GM12878 (cell line): ENCODE measurements at regions of chr18 and their contacts with region 1.

Region 1: DNA sequence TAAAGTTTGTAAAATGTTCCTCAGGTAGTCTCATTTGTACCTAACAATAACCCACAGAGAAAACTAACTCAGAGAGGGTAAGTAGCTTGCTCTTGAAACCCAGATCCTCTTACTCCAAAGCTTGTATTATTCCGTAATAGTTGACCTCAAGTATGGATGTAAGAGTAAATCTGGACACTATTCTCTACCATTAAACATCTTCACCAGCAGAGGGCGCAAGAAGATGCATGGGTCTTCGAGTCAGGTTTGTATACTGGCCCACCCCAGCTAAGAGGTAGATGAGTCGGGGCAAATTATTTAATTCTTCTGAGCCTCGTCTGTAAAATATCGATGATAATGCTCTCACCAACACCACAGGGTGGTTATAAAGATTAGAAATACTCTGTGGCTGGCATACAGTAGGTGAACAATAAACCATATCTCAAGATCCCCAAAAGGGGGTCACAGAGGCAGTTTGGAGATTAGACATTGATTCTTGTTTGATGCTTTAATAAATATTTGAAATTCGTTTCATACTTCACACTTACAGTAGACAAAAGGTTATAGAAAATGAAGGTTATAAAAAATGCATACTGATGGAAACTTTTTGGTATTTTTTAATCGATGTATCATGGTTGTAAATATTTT is 3.5 kb upstream of the CABLES1 start:
- DNase-seq: peak; percentile 58
- ATAC-seq: peak; percentile 44
- H3K4me3 ChIP-seq: no peak overlapping the region
- H3K27ac ChIP-seq: no peak overlapping the region
- H3K4me1 ChIP-seq: peaks cover 18% of the 10 kb centered on the region
- H3K27me3 ChIP-seq: no peaks in the 10 kb centered on the region
- CTCF ChIP-seq: peak; percentile 64 to 82 (median 67)
- EP300 ChIP-seq: no peak
- POLR2A ChIP-seq: no peak
- RAD21 ChIP-seq: peak; percentile 89

Region 2: DNA sequence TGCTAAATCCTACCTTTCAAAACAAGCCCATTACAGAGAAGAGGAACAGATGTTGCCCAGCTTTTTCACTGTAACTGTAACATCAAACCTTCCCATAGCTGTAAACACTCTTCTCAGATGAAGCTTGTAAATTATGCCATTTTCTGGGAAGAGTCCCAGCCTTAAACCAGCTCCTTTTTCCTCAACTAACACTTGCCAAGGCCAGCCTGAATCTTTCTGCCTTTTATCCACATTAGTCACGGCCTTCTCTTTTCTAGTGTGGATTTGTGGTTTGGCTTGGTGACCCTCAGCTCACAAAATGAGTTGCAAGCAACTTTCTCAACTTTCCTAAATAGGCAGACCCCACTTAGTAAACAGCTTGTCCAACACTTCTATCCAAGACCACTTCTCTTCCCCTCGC is 93.7 kb after region 1 on chr18:
- CTCF ChIA-PET with region 1: interaction called, 59 read pairs
- POLR2A ChIA-PET with region 1: interaction called, 86 read pairs
- RAD21 ChIA-PET with region 1: interaction called, 114 read pairs
- SMC1A ChIA-PET with region 1: interaction called, 35 read pairs
- in situ Hi-C with region 1: loop called (anchors 5 kb)
- intact Hi-C with region 1: no loop called
- DNase-seq: no peak
- ATAC-seq: no peak
- H3K4me3 ChIP-seq: no peak overlapping the region
- H3K27ac ChIP-seq: peak overlapping the region; percentile 70
- H3K4me1 ChIP-seq: peaks cover 58% of the 10 kb centered on the region
- H3K27me3 ChIP-seq: no peaks in the 10 kb centered on the region
- CTCF ChIP-seq: no peak
- EP300 ChIP-seq: no peak
- POLR2A ChIP-seq: no peak
- RAD21 ChIP-seq: no peak

Region 3: GRCh38 chr18:23237524-23238151 is 105.8 kb after region 1 on chr18:
- CTCF ChIA-PET with region 1: interaction called, 9 read pairs
- POLR2A ChIA-PET with region 1: interaction called, 14 read pairs
- RAD21 ChIA-PET with region 1: interaction called, 29 read pairs
- SMC1A ChIA-PET with region 1: interaction called, 19 read pairs
- in situ Hi-C with region 1: no loop called
- intact Hi-C with region 1: no loop called
- DNase-seq: peak; percentile 81
- ATAC-seq: peak; percentile 86
- H3K4me3 ChIP-seq: no peak overlapping the region
- H3K27ac ChIP-seq: peak overlapping the region; percentile 76
- H3K4me1 ChIP-seq: peaks cover 50% of the 10 kb centered on the region
- H3K27me3 ChIP-seq: no peaks in the 10 kb centered on the region
- CTCF ChIP-seq: peak; percentile 21 to 55 (median 45); a peak in 4 of 6 replicates
- EP300 ChIP-seq: peak; percentile 56 to 87; a peak in 3 of 4 replicates
- POLR2A ChIP-seq: no peak
- RAD21 ChIP-seq: peak; percentile 63

Region 4: GRCh38 chr18:23259701-23260582 is 128.1 kb after region 1 on chr18:
- CTCF ChIA-PET with region 1: interaction called, 16 read pairs
- POLR2A ChIA-PET with region 1: interaction called, 3 read pairs
- RAD21 ChIA-PET with region 1: interaction called, 16 read pairs
- SMC1A ChIA-PET with region 1: interaction called, 8 read pairs
- in situ Hi-C with region 1: no loop called
- intact Hi-C with region 1: no loop called
- DNase-seq: no peak
- ATAC-seq: peak; percentile 82
- H3K4me3 ChIP-seq: peak overlapping the region; percentile 28; the same call in 1 of the 2 replicates
- H3K27ac ChIP-seq: peak overlapping the region; percentile 77
- H3K4me1 ChIP-seq: peaks cover 22% of the 10 kb centered on the region
- H3K27me3 ChIP-seq: no peaks in the 10 kb centered on the region
- CTCF ChIP-seq: no peak
- EP300 ChIP-seq: peak in 1 of 2 experiments; percentile 50; a peak in 1 of 4 replicates
- POLR2A ChIP-seq: no peak; the same call in none of the 2 replicates
- RAD21 ChIP-seq: no peak

Region 5: DNA sequence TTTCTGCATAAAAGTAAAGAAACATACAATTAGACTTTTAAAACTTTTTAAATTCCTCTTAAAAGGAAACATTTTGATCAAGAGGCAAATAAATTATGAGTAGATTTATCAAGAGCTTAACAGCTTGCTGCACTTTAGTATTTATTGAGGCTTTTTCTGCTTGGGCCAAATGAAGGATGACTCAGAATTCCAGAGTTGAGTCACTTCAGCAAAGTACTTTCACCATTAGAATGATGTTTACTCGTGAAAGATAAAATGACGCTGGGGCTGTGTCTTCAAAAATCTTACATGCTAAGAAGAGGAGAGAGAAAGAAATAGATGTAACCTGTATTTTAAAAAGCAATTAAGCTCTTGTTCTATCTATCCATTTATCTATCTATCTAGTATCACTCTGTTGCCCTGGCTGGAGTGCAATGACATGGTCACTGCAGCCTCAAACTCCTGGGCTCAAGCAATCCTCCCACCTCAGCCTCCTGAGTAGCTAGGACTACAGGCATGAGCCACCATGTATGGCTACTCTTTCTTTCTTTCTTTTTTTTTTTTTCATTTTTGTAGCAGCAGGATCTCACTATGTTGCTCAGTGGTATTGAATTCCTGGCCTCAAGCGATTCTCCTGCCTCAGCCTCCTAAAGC is 246.0 kb after region 1 on chr18:
- CTCF ChIA-PET with region 1: interaction called, 39 read pairs
- POLR2A ChIA-PET with region 1: interaction called, 3 read pairs
- RAD21 ChIA-PET with region 1: interaction called, 31 read pairs
- SMC1A ChIA-PET with region 1: interaction called, 9 read pairs
- in situ Hi-C with region 1: no loop called
- intact Hi-C with region 1: no loop called
- DNase-seq: peak; percentile 39
- ATAC-seq: peak; percentile 88
- H3K4me3 ChIP-seq: no peak overlapping the region
- H3K27ac ChIP-seq: no peak overlapping the region
- H3K4me1 ChIP-seq: peaks cover 2% of the 10 kb centered on the region; the same call in 1 of the 2 replicates
- H3K27me3 ChIP-seq: no peaks in the 10 kb centered on the region
- CTCF ChIP-seq: no peak
- EP300 ChIP-seq: 0 out of 4 replicates have a peak, but pooled peaks of 1 of the 2 experiments have one; percentile 31
- POLR2A ChIP-seq: no peak
- RAD21 ChIP-seq: no peak